Heart left ventricle (tissue), 16 donors: ENCODE measurements at regions of chr12 and their contacts with region 1.

Region 1: DNA sequence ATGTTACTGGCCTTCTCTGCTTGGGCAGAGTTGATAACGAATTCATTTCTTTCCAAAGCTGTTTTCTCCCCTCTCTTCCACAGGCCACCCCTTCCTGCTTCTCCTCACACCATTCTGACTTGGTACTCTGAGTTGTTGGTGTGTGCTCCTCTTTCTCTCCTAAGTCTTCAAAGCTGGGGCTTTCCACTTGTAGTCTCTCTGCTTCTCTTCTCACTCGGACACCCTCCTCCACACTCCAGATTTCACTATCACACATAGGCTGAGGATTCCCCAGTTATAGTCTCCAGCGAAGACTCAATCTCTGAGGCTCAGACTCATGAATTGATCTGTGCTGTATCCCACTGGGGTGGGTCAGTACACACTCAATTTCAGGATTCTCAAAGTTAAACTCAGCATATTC is 201.0 kb downstream of the SSPN start:
- DNase-seq: no peak
- ATAC-seq: no peak
- H3K4me3 ChIP-seq: no peak overlapping the region
- H3K27ac ChIP-seq: no peak overlapping the region
- H3K4me1 ChIP-seq: no peaks in the 10 kb centered on the region
- H3K27me3 ChIP-seq: no peaks in the 10 kb centered on the region
- CTCF ChIP-seq: no peak
- POLR2A ChIP-seq: no peak

Region 2: GRCh38 chr12:26204612-26205289 is 191.7 kb before region 1 on chr12:
- intact Hi-C with region 1: loop called in 1 of 10 experiments (anchors 10 kb)
- DNase-seq: peak in 2 of 5 donors; percentile 21 to 26
- ATAC-seq: peak in 3 of 4 donors; percentile 20 to 51 (median 45)
- H3K4me3 ChIP-seq: peak overlapping the region in 1 of 12 donors; percentile 6
- H3K27ac ChIP-seq: peak overlapping the region in 1 of 12 donors; percentile 18
- H3K4me1 ChIP-seq: peaks cover 0 to 29% (median 3%) of the 10 kb centered on the region in 12 donors
- H3K27me3 ChIP-seq: no peaks in the 10 kb centered on the region
- CTCF ChIP-seq: no peak
- POLR2A ChIP-seq: no peak

Region 3: GRCh38 chr12:26599096-26599695 is 202.8 kb after region 1 on chr12:
- intact Hi-C with region 1: no loop called
- DNase-seq: no peak
- ATAC-seq: no peak
- H3K4me3 ChIP-seq: no peak overlapping the region
- H3K27ac ChIP-seq: no peak overlapping the region
- H3K4me1 ChIP-seq: no peaks in the 10 kb centered on the region
- H3K27me3 ChIP-seq: no peaks in the 10 kb centered on the region
- CTCF ChIP-seq: no peak
- POLR2A ChIP-seq: no peak